Ovary (tissue), 10 donors: ENCODE measurements at regions of chr10 and their contacts with region 1.

Region 1: GRCh38 chr10:102917962-102918816 is at the start of gene CNNM2:
- DNase-seq: peak; percentile 99 to 100 (median 100)
- H3K4me3 ChIP-seq: peak within 1 kb of the TSS; percentile 85
- H3K27ac ChIP-seq: peak within 1 kb of the TSS; percentile 80 to 83
- H3K4me1 ChIP-seq: peaks cover 4% of the 10 kb centered on the region
- H3K27me3 ChIP-seq: no peaks in the 10 kb centered on the region
- CTCF ChIP-seq: no peak
- EP300 ChIP-seq: no peak
- POLR2A ChIP-seq: peak; percentile 37
- total RNA-seq, gene CNNM2: 6.7 to 15.0 (median 8.9) TPM

Region 2: GRCh38 chr10:103053659-103054581 is 135.7 kb after region 1 on chr10:
- intact Hi-C with region 1: loop called in 1 of 4 experiments (anchors 5 kb)
- DNase-seq: peak; percentile 69 to 77 (median 73)
- H3K4me3 ChIP-seq: peak overlapping the region; percentile 30
- H3K27ac ChIP-seq: peak overlapping the region in 1 of 2 donors; percentile 58
- H3K4me1 ChIP-seq: peaks cover 8% of the 10 kb centered on the region
- H3K27me3 ChIP-seq: no peaks in the 10 kb centered on the region
- CTCF ChIP-seq: peak in 2 of 3 donors; percentile 21 to 27
- EP300 ChIP-seq: no peak
- POLR2A ChIP-seq: peak; percentile 19

Region 3: GRCh38 chr10:103069453-103070331 is 151.5 kb after region 1 on chr10:
- intact Hi-C with region 1: loop called (anchors 1 to 5 kb)
- DNase-seq: peak; percentile 54 to 75 (median 73)
- H3K4me3 ChIP-seq: no peak overlapping the region
- H3K27ac ChIP-seq: no peak overlapping the region
- H3K4me1 ChIP-seq: no peaks in the 10 kb centered on the region
- H3K27me3 ChIP-seq: no peaks in the 10 kb centered on the region
- CTCF ChIP-seq: peak; percentile 70 to 74 (median 73)
- EP300 ChIP-seq: no peak
- POLR2A ChIP-seq: no peak

Region 4: DNA sequence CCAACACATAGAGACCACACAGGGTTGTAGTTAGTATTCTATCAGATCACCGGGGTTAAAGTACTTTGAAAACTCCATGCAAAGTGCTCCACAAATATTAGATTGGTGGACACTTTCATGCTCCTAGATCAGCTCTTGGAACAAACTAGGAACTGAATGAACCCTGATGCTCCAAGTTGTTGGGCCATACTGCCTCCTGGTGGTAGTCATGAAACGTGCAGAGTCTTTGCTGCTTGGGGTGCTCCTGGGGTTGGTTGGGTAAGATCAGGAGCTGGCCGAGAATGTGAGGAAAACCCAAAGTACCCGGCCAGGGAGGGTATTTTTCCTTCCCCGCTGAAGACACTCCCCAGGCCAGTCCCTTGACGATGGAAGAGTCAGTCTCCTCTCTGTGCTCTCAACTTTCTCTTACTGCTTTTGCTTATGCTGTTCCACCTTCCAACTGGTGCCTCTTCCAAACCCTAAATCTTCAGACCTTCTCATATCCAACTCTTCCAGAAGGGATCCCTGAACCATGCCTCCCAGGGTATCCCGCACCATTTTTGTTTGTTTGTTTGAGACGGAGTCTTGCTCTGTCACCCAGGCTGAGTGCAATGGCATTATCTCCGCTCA is 326.6 kb after region 1 on chr10:
- intact Hi-C with region 1: loop called (anchors 2 to 10 kb)
- DNase-seq: peak; percentile 56 to 81 (median 58)
- H3K4me3 ChIP-seq: no peak overlapping the region
- H3K27ac ChIP-seq: no peak overlapping the region
- H3K4me1 ChIP-seq: no peaks in the 10 kb centered on the region
- H3K27me3 ChIP-seq: no peaks in the 10 kb centered on the region
- CTCF ChIP-seq: peak; percentile 29 to 80 (median 57)
- EP300 ChIP-seq: no peak
- POLR2A ChIP-seq: no peak